ENCODE measurements at regions of chr6 and their contacts with region 1.

Region 1: DNA sequence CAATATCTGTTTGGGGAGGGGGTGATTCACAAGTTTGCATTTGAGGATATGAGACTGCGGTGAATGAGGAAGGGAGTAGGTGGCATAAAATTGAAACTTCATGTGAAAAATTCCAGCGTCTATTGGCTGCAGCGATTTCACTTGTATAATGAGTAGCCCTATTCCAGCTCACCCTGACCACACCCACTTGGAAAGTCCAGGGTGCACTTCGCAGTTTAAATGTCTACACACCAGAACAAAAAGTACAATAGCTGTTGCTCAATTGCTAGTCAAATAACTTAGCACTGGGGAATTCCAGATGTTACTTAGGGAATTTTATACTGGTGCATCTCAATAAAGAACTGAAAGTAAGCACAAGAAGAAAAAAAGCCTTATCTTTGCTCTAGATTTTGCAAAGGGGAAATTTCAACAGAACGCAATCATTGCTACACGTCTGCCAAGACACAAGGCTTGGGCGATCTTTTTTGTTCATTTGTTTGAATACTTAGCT is 6.3 kb downstream of the TNFAIP3 start:
- DNase-seq: peak; percentile 97
- H3K4me3 Mint-ChIP-seq: peak overlapping the region; percentile 72
- H3K27ac Mint-ChIP-seq: peak overlapping the region; percentile 78
- H3K4me1 Mint-ChIP-seq: peaks cover 15% of the 10 kb centered on the region
- H3K27me3 Mint-ChIP-seq: no peaks in the 10 kb centered on the region
- CTCF ChIP-seq: no peak

Region 2: DNA sequence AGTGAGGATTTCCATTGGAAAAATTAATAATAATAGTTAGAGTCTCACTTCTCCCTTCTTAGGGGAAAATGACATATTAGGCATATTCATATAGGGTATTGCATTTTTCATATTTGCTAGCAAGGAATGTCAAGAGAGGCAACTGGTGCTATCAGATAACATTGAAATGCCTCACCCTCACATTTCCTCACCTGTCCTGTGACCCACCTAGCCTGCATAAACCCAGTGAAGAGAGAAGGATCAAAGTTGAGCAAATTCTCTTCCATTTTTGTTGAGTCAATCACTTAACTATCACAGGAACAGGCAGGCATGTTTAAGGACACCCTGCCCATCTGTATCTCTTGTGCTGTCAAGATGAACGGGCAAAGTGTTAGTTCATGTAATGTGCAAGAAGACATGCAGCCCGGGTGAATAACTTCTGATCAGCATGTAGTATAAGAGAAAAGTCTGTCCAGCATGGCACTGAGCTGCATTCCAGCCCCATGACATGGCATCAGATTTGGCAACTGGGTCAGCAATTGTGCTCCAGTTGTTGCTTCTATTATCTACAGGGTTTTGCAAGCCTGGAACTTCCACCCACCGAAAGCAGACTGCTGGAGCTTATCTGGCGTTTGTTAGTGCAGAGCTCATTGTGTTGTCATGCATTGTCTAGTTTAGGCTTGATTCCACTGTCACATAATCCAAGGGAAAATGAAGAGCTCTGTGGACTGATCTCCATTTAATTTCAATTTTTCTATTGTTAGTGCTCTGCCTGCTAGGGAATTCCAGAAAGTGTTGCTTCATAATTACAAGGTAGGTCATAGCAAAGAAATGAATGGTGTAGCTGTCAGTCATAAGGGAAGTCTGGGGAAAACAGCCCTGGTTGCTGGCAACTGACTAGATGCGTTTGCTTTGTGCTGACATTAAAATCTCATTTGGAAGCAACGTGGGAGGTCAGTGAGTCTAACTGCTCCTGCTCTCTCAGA is 144.7 kb before region 1 on chr6:
- CTCF ChIA-PET with region 1: interaction called, 12 read pairs
- POLR2A ChIA-PET with region 1: interaction called, 43 read pairs
- intact Hi-C with region 1: loop called (anchors 2 kb)
- DNase-seq: peak; percentile 95
- H3K4me3 Mint-ChIP-seq: peak overlapping the region; percentile 22
- H3K27ac Mint-ChIP-seq: peak overlapping the region; percentile 73
- H3K4me1 Mint-ChIP-seq: peaks cover 37% of the 10 kb centered on the region
- H3K27me3 Mint-ChIP-seq: no peaks in the 10 kb centered on the region
- CTCF ChIP-seq: no peak

Region 3: DNA sequence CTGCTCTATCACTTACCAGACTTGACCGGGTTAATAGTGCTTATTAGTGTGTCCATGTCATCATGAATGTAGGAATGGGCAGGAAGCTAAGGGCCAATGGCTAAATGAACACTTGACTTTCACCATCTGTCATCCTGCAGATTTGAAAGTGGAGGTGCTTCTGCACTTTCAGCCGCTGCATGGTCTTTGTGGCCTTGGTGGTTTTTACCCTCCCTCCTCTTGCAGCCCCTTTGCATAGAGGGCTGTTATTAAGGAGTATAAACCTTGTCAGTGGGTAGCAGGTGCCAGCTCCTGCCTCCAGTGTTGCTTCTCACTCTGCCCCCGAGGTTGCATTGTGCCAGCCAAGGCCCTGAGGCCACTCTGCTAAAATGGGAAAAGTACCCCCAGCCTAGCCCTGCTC is 128.4 kb before region 1 on chr6:
- CTCF ChIA-PET with region 1: no interaction called
- POLR2A ChIA-PET with region 1: no interaction called
- intact Hi-C with region 1: no loop called
- DNase-seq: no peak
- H3K4me3 Mint-ChIP-seq: no peak overlapping the region
- H3K27ac Mint-ChIP-seq: no peak overlapping the region
- H3K4me1 Mint-ChIP-seq: peaks cover 23% of the 10 kb centered on the region
- H3K27me3 Mint-ChIP-seq: no peaks in the 10 kb centered on the region
- CTCF ChIP-seq: no peak

Region 4: DNA sequence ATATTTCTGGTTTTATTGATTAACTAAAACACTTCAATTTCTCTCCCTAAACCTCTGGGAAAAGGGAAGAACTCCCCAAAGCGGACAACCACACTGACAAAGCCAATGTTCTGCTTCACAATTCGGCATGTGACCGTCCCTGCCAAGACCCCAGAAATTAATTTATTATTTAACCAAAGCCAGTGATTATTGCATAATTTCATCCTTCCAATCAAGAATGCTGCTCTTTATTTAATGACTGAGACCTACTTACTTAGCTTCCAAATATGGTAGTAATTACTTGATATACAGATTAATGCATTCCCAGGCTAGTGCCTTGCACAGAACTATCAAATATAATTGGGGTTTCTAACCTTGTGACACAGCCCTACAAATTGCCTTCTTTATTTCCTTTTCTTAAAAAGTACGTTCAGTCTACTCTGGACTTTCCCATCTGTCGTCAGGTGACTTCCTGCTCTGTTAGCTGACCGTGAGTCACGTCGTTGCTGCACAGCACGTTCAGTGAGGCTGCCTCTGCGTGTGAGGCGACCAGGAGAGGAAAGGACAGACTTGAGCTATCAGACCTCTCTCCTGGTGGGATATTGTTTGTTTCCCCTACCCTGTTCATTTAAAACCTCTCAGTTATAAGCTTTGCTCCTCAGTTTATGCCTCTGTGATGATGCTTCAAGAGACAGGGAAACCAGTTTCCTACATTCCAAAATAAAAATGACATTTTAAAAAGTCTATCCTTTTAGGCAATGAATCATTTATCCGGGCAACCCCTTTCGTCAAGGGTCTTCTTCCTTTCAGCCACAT is 62.0 kb before region 1 on chr6:
- CTCF ChIA-PET with region 1: interaction called, 13 read pairs
- POLR2A ChIA-PET with region 1: interaction called, 127 read pairs
- intact Hi-C with region 1: no loop called
- DNase-seq: peak; percentile 92
- H3K4me3 Mint-ChIP-seq: peak overlapping the region; percentile 58
- H3K27ac Mint-ChIP-seq: peak overlapping the region; percentile 94
- H3K4me1 Mint-ChIP-seq: peaks cover 55% of the 10 kb centered on the region
- H3K27me3 Mint-ChIP-seq: no peaks in the 10 kb centered on the region
- CTCF ChIP-seq: no peak

Region 5: DNA sequence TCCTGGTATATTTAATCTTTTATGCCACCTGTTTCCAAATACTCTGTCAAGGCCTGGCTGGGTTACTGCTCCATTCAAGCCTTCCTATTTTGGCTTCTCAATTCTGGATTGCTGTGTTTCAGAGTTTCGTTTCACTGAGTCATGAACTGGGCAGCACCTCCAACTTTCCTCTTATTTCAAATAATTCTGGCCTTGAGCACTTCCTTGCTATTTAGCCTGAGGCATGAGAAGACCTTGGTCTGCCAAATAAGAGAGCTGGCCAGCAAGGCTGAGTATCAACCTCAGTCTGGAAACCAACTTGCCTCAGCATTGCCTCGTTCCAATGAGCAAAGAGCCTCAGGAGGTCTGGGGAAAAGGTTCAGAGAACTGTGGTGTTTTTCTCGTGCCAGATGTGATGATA is 60.4 kb after region 1 on chr6:
- CTCF ChIA-PET with region 1: interaction called, 29 read pairs
- POLR2A ChIA-PET with region 1: interaction called, 43 read pairs
- intact Hi-C with region 1: no loop called
- DNase-seq: peak; percentile 72
- H3K4me3 Mint-ChIP-seq: no peak overlapping the region
- H3K27ac Mint-ChIP-seq: peak overlapping the region; percentile 79
- H3K4me1 Mint-ChIP-seq: peaks cover 11% of the 10 kb centered on the region
- H3K27me3 Mint-ChIP-seq: no peaks in the 10 kb centered on the region
- CTCF ChIP-seq: no peak

Region 6: GRCh38 chr6:137944793-137945498 is 71.6 kb after region 1 on chr6:
- CTCF ChIA-PET with region 1: interaction called, 112 read pairs
- POLR2A ChIA-PET with region 1: interaction called, 90 read pairs
- intact Hi-C with region 1: loop called (anchors 1 kb)
- DNase-seq: peak; percentile 55
- H3K4me3 Mint-ChIP-seq: no peak overlapping the region
- H3K27ac Mint-ChIP-seq: peak overlapping the region; percentile 82
- H3K4me1 Mint-ChIP-seq: peaks cover 19% of the 10 kb centered on the region
- H3K27me3 Mint-ChIP-seq: no peaks in the 10 kb centered on the region
- CTCF ChIP-seq: peak; percentile 72

Region 7: GRCh38 chr6:138538390-138539031 is 665.2 kb after region 1 on chr6:
- CTCF ChIA-PET with region 1: no interaction called
- POLR2A ChIA-PET with region 1: no interaction called
- intact Hi-C with region 1: no loop called
- DNase-seq: no peak
- H3K4me3 Mint-ChIP-seq: no peak overlapping the region
- H3K27ac Mint-ChIP-seq: no peak overlapping the region
- H3K4me1 Mint-ChIP-seq: no peaks in the 10 kb centered on the region
- H3K27me3 Mint-ChIP-seq: no peaks in the 10 kb centered on the region
- CTCF ChIP-seq: no peak

Measured in MCF 10A (cell line).